Activated CD4-positive, alpha-beta T cell treated with anti-CD3 and anti-CD28 coated beads, Interleukin-2, amount 10 ng/mL, durations not matched to agents 24 days and 14 days (primary cell): ENCODE measurements at regions of chr7 and their contacts with region 1.

Region 1: GRCh38 chr7:25851332-25852210 is 300.4 kb upstream of the NFE2L3 start:
- DNase-seq: peak; percentile 91
- H3K4me3 Mint-ChIP-seq: peak overlapping the region; percentile 79
- H3K27ac Mint-ChIP-seq: peak overlapping the region; percentile 78
- H3K4me1 Mint-ChIP-seq: peaks cover 19% of the 10 kb centered on the region
- H3K27me3 Mint-ChIP-seq: peaks cover 51% of the 10 kb centered on the region

Region 2: DNA sequence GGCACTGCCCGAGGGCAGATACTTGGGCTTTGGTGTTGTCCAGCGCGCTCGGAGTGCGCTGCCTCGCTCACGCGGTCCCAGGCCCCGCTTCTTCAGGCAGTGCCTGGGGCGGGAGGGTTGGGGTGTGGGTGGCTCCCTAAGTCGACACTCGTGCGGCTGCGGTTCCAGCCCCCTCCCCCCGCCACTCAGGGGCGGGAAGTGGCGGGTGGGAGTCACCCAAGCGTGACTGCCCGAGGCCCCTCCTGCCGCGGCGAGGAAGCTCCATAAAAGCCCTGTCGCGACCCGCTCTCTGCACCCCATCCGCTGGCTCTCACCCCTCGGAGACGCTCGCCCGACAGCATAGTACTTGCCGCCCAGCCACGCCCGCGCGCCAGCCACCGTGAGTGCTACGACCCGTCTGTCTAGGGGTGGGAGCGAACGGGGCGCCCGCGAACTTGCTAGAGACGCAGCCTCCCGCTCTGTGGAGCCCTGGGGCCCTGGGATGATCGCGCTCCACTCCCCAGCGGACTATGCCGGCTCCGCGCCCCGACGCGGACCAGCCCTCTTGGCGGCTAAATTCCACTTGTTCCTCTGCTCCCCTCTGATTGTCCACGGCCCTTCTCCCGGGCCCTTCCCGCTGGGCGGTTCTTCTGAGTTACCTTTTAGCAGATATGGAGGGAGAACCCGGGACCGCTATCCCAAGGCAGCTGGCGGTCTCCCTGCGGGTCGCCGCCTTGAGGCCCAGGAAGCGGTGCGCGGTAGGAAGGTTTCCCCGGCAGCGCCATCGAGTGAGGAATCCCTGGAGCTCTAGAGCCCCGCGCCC is 1567.5 kb before region 1 on chr7 and contains the start of gene NPY:
- intact Hi-C with region 1: loop called (anchors 10 kb)
- DNase-seq: no peak
- H3K4me3 Mint-ChIP-seq: peak within 1 kb of the TSS; percentile 73
- H3K27ac Mint-ChIP-seq: no peak within 1 kb of the TSS
- H3K4me1 Mint-ChIP-seq: peaks cover 3% of the 10 kb centered on the region
- H3K27me3 Mint-ChIP-seq: peaks cover 59% of the 10 kb centered on the region
- total RNA-seq, gene NPY: not detected in 2 replicates

Region 3: GRCh38 chr7:25259587-25260243 is 591.9 kb before region 1 on chr7:
- intact Hi-C with region 1: loop called (anchors 2 kb)
- DNase-seq: peak; percentile 88
- H3K4me3 Mint-ChIP-seq: no peak overlapping the region
- H3K27ac Mint-ChIP-seq: no peak overlapping the region
- H3K4me1 Mint-ChIP-seq: peaks cover 16% of the 10 kb centered on the region
- H3K27me3 Mint-ChIP-seq: peaks cover 17% of the 10 kb centered on the region

Region 4: GRCh38 chr7:25389489-25390106 is 462.0 kb before region 1 on chr7:
- intact Hi-C with region 1: loop called (anchors 5 kb)
- DNase-seq: peak; percentile 69
- H3K4me3 Mint-ChIP-seq: no peak overlapping the region
- H3K27ac Mint-ChIP-seq: no peak overlapping the region
- H3K4me1 Mint-ChIP-seq: no peaks in the 10 kb centered on the region
- H3K27me3 Mint-ChIP-seq: peaks cover 12% of the 10 kb centered on the region

Region 5: DNA sequence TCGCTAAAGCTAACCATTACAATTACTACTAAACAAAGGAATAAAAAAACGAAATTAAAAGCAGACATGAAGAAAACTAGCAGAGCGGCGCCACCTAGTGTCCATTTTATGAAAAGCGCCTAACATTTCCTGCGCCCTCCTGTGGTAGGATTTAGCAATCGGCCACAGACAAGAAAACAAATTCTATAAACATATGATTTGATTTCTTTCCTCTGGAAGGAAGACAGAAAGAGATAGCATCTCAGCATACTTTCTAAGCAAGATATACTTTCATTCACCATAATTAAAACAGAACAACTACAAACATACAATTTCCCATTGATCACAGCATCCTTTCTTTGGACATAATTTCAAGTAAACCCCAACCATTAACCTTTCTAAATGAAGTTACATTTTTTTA is 285.6 kb before region 1 on chr7:
- intact Hi-C with region 1: loop called (anchors 5 kb)
- DNase-seq: peak; percentile 90
- H3K4me3 Mint-ChIP-seq: peak overlapping the region; percentile 53
- H3K27ac Mint-ChIP-seq: no peak overlapping the region
- H3K4me1 Mint-ChIP-seq: peaks cover 6% of the 10 kb centered on the region
- H3K27me3 Mint-ChIP-seq: peaks cover 2% of the 10 kb centered on the region

Region 6: DNA sequence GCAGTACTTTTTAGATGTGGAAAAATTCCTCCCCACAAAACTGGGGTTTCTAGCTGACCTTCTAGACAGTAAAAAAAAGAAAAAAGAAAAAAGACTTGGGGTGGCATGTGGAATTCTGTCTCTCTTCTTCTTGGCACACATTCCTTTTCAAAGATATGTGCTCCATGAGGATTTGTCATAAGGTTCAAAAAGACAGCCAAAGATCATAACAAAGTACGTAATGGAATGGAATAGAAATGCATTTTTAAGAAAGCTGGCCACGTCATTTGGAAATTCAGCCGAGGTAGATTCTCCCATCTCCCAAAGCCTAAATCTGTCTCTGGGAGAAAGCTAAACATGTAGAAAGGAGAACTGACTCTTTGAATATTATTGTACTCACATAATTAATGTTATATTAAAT is 80.9 kb before region 1 on chr7:
- intact Hi-C with region 1: no loop called
- DNase-seq: no peak
- H3K4me3 Mint-ChIP-seq: no peak overlapping the region
- H3K27ac Mint-ChIP-seq: no peak overlapping the region
- H3K4me1 Mint-ChIP-seq: no peaks in the 10 kb centered on the region
- H3K27me3 Mint-ChIP-seq: peaks cover 6% of the 10 kb centered on the region